Thyroid gland (tissue), 4 donors: ENCODE measurements at regions of chr3 and their contacts with region 1.

Region 1: GRCh38 chr3:50227390-50228183 is 8.4 kb upstream of the GNAI2 start:
- DNase-seq: peak; percentile 97
- H3K4me3 ChIP-seq: peak overlapping the region; percentile 9 to 57 (median 46)
- H3K27ac ChIP-seq: peak overlapping the region; percentile 43 to 71 (median 54)
- H3K4me1 ChIP-seq: peaks cover 15 to 19% of the 10 kb centered on the region in 2 donors
- H3K27me3 ChIP-seq: no peaks in the 10 kb centered on the region
- CTCF ChIP-seq: peak; percentile 41 to 97 (median 85)
- POLR2A ChIP-seq: peak in 1 of 2 donors; percentile 53

Region 2: GRCh38 chr3:50272911-50273693 is 45.5 kb after region 1 on chr3:
- intact Hi-C with region 1: loop called (anchors 2 kb)
- DNase-seq: peak; percentile 84 to 88
- H3K4me3 ChIP-seq: peak overlapping the region in 1 of 3 donors; percentile 13
- H3K27ac ChIP-seq: peak overlapping the region in 1 of 3 donors; percentile 43
- H3K4me1 ChIP-seq: peaks cover 28 to 48% of the 10 kb centered on the region in 2 donors
- H3K27me3 ChIP-seq: no peaks in the 10 kb centered on the region
- CTCF ChIP-seq: peak; percentile 95 to 99 (median 97)
- POLR2A ChIP-seq: peak in 1 of 2 donors; percentile 17